Cardiac septum (tissue), 1 donor: ENCODE measurements at regions of chr5 and their contacts with region 1.

Region 1: DNA sequence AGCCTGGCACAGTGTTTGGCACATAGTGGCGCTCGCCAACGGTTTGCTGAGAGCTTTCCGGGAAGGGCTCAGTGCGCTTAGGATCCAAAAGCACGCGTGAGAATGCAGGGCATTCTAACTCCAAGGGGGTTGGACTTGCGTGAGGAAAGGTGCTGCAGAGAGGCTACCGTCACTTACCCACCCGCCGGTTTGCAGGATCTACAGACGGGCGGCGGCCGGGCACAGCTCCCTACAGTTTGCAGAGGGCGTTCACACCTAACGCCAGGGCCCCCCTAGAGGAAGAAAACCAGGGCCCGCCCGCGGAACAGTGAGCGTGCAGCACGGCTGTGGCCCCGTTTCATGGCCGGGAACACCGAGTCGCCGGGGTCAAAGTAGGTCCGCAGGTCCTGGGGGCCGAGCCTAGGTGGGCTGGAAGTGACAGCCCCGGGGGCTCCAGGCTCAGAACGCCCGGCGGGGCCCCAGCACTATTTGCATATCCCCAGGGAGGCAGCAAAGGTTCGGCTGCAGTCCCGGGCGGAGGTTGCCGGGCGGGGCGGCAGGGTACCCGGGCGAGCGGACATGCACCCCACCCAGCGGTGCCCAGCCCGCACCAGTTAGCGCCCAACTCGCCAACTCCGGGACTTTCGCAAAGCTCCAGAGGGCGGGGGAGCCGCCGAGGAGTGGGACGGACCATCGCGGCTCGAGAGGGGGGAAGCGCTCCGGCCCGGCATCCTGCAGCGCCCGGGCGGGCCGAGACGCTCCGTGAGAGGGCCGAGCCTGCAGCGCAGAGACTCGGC is 526 bp upstream of the GALNT10 start:
- DNase-seq: peak; percentile 92

Region 2: DNA sequence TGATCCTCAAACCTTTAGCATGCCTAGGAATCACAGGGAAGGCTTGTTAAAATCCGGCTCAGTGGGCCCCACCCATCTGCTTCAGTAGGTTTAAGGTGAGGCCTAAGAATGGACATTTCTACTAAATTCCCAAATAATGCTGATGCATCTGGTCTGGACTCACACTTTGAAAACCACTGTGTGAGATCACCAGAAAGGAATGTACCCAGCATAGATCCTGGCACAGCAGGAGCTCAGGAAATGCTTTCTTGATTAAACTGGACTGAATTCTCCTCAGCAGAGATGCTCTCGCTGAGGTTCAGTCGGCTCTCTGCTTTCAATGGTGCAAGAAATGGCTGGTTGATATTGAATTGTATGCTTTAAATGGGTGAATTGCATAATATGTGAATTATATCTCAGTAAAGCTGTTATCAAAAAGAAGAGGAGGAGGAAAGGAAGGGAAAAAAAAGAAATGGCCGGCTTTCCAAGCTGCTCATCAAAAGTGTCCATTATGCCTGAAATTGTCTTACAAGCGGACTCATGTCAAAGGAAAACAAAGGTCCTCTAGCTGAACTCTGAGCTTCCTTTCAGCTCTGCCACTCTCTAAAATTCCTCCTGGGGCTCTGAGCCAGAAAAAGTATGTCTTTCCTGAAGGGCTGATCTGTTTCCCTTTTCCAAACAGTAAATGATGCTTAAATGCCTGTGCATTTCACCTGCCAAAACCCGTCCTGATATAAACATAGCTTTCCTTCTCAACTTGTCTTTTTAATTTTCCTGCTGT is 178.2 kb after region 1 on chr5:
- intact Hi-C with region 1: loop called (anchors 5 kb)
- DNase-seq: no peak